Activated CD4-positive, alpha-beta T cell treated with anti-CD3 and anti-CD28 coated beads for 36 hours (primary cell): ENCODE measurements at regions of chr1 and their contacts with region 1.

Region 1: GRCh38 chr1:225881969-225882693 is at the start of gene TMEM63A:
- DNase-seq: peak; percentile 92
- ATAC-seq: peak; percentile 55
- H3K4me3 Mint-ChIP-seq: peak within 1 kb of the TSS; percentile 89
- H3K27ac Mint-ChIP-seq: peak within 1 kb of the TSS; percentile 91
- H3K4me1 Mint-ChIP-seq: peaks cover 50% of the 10 kb centered on the region
- H3K27me3 Mint-ChIP-seq: no peaks in the 10 kb centered on the region
- total RNA-seq, gene TMEM63A: 47.3 to 48.0 TPM

Region 2: GRCh38 chr1:225454733-225455132 is 427.4 kb before region 1 on chr1:
- CTCF ChIA-PET with region 1: no interaction called
- POLR2A ChIA-PET with region 1: no interaction called
- intact Hi-C with region 1: no loop called
- DNase-seq: peak; percentile 91
- ATAC-seq: peak; percentile 98
- H3K4me3 Mint-ChIP-seq: peak overlapping the region; percentile 44
- H3K27ac Mint-ChIP-seq: peak overlapping the region; percentile 79
- H3K4me1 Mint-ChIP-seq: peaks cover 42% of the 10 kb centered on the region
- H3K27me3 Mint-ChIP-seq: no peaks in the 10 kb centered on the region

Region 3: DNA sequence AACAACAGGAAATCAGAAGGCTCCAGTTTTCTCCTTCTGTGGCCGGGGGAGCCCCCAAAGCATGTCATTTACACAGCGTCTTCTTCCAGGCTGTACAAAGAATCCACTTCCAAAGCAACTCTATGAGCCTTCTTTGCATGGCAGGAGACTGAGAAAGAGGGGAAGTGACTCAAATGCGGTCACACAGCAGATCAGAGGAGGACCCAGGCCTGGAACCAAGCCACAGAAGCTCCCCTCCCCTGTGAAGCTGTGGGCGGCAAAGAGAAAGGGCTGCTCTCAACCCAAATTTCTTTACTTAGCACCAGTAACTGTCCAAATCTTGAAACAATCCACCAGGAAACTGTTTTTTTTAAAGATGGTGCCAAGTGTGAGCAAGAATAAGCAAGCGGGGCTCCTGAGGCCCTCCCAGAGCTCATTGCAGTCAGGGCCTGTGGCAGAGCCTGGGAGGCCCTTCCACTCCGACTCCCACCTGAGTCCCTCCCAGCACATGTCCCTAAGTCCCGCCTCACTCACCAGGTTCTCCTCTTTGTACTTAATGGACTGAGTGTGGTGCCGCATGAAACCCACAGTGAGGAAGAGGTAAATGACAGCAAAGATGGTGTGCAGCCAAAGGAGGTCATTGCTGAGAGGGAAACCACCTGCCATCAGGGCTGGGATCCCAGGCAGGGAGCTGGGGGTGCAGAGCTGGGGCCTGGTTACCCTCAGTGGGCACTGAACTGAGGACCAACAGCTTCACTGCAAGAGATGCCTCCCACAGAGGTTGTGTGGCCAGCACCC is 15.9 kb before region 1 on chr1:
- CTCF ChIA-PET with region 1: interaction called, 9 read pairs
- POLR2A ChIA-PET with region 1: interaction called, 6 read pairs
- intact Hi-C with region 1: loop called in 1 of 2 experiments (anchors 2 kb)
- DNase-seq: peak; percentile 88
- ATAC-seq: peak; percentile 95
- H3K4me3 Mint-ChIP-seq: peak overlapping the region; percentile 28
- H3K27ac Mint-ChIP-seq: peak overlapping the region; percentile 82
- H3K4me1 Mint-ChIP-seq: peaks cover 43% of the 10 kb centered on the region
- H3K27me3 Mint-ChIP-seq: no peaks in the 10 kb centered on the region

Region 4: DNA sequence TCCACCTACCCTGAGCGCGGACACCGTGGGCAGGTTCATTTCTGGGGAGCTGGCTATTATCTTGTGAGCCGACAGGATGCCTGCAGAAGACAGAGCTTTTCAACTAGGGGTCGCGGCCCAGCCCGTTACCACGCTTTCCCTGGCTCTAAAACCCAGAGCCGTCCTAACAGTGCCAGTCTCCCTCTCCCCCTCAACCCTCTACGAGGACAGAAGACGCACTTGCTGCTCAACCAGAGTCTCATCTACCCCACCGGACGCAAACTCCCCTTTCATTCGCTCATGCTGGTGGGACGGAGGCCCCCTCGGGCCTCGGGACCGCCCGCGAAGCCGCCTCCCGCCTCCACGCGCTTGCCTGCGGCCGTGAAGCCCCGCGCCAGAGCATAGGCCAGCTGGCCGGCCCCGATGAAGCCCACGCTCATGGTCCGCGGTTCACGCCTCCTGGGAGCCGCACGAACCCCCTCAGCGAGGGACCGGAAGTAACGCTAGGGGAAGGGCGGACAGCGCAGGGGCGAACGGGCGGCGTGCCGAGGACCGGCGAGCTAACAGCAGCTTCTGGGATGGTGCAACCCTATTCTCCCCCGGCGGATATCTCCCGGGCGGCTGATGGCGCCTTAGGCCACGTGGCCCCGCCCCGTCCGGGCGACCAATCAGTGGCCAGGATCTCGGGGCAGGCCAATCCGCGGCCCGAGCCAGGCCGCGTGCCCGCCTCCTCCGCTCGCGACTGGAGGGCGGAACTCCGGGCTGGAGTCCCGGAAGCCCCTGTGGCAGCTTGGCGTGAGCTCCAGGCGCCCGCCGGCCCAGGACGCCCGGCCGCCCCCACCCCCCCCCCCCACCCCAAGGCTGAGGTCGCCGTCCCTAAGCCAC is 41.8 kb after region 1 on chr1 and contains the start of gene PYCR2:
- CTCF ChIA-PET with region 1: interaction called, 7 read pairs
- POLR2A ChIA-PET with region 1: interaction called, 4 read pairs
- intact Hi-C with region 1: loop called (anchors 1 to 2 kb)
- DNase-seq: peak; percentile 97
- ATAC-seq: peak; percentile 97
- H3K4me3 Mint-ChIP-seq: peak within 1 kb of the TSS; percentile 93
- H3K27ac Mint-ChIP-seq: peak within 1 kb of the TSS; percentile 96
- H3K4me1 Mint-ChIP-seq: peaks cover 54% of the 10 kb centered on the region
- H3K27me3 Mint-ChIP-seq: no peaks in the 10 kb centered on the region
- total RNA-seq, gene PYCR2: 106 to 126 TPM